GM12878 (cell line): ENCODE measurements at regions of chr3 and their contacts with region 1.

Region 1: DNA sequence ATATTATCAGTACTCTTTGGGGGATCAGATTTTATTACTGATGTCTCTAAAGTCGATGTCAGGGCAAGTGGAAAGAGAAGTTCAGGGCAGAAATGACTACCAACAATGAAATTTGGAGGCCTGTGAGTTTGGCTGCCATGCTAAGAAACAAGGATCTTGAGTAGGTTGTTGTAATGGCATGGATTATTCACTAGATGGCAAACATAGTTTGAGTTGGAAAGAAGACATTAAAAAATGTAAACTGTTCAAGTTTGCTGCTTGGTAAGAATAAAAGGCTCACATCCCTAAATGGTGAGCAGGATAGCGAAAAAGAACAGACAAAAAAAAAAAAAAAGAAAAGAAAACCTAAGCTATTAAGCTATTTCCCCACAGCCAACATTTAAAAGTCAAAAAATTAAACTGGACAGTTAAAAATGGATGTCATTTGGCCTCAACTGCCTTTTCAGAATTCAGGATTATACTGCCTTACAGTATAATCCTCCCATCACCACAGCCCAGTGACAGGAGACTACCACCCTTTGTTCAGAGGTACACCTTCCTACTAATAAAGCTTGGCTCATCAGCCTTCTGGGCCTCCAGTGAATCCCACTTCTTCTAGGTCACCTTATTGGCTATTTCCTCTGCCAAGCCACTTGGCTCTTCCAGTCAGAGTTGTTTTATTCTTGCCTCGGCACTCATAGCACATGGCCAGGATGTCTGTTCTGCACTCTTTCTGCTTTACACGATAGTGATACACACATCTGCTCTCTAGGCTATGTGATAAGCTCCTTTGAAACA is 163.7 kb downstream of the PLD1 start:
- DNase-seq: no peak
- ATAC-seq: peak; percentile 70
- H3K4me3 ChIP-seq: no peak overlapping the region
- H3K27ac ChIP-seq: no peak overlapping the region
- H3K4me1 ChIP-seq: no peaks in the 10 kb centered on the region
- H3K27me3 ChIP-seq: no peaks in the 10 kb centered on the region
- CTCF ChIP-seq: peak; percentile 44 to 67 (median 55)
- EP300 ChIP-seq: no peak
- POLR2A ChIP-seq: no peak
- RAD21 ChIP-seq: peak; percentile 80

Region 2: GRCh38 chr3:171712171-171712938 is 65.8 kb after region 1 on chr3:
- CTCF ChIA-PET with region 1: no interaction called
- POLR2A ChIA-PET with region 1: no interaction called
- RAD21 ChIA-PET with region 1: no interaction called
- SMC1A ChIA-PET with region 1: no interaction called
- in situ Hi-C with region 1: no loop called
- intact Hi-C with region 1: no loop called
- DNase-seq: no peak
- ATAC-seq: no peak
- H3K4me3 ChIP-seq: no peak overlapping the region
- H3K27ac ChIP-seq: no peak overlapping the region
- H3K4me1 ChIP-seq: no peaks in the 10 kb centered on the region
- H3K27me3 ChIP-seq: no peaks in the 10 kb centered on the region
- CTCF ChIP-seq: no peak
- EP300 ChIP-seq: no peak
- POLR2A ChIP-seq: no peak
- RAD21 ChIP-seq: no peak

Region 3: DNA sequence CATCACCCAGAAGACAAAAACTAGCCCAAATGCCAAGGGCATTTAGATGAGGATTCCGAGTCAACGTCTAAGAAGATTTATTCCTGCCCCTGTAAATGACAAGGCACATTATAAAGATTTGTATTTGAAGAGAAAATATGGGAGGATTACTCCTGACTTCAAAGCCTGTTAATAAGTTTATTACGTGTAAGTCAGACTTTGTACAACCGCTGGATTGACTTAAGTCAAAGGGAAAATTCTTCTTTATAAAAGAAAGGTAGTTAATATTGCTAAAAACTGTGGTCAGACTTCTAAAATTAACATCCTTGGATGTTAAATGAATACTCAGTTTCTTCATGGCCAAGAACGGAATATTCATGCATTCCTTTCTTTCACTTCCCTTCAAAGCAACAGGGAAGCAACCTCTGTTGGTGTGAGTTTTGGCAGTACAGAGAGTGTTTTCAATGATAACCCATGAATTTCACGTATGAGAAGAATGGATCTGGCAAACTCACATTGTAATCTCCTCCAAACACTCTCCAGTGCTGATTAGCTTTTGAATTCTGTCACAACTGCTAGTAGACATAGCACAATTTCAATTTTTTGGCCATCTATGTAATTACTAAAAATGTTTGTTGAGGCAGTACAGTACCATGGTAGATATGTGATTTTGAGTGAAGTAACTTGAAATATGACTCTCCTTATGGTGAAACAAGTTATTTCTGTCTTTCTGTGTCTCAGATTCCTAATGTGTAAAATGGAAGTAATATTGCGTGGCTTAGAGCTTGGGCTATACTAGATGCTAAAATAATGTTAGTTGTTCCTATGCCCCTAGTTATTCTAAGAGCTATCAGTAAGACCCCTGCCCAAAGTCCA is 101.7 kb after region 1 on chr3:
- CTCF ChIA-PET with region 1: no interaction called
- POLR2A ChIA-PET with region 1: no interaction called
- RAD21 ChIA-PET with region 1: no interaction called
- SMC1A ChIA-PET with region 1: no interaction called
- in situ Hi-C with region 1: no loop called
- intact Hi-C with region 1: no loop called
- DNase-seq: no peak
- ATAC-seq: no peak
- H3K4me3 ChIP-seq: no peak overlapping the region
- H3K27ac ChIP-seq: no peak overlapping the region
- H3K4me1 ChIP-seq: no peaks in the 10 kb centered on the region
- H3K27me3 ChIP-seq: no peaks in the 10 kb centered on the region; a peak in 1 of 4 replicates
- CTCF ChIP-seq: no peak
- EP300 ChIP-seq: no peak
- POLR2A ChIP-seq: no peak
- RAD21 ChIP-seq: no peak

Region 4: GRCh38 chr3:172476347-172476746 is 829.8 kb after region 1 on chr3:
- CTCF ChIA-PET with region 1: no interaction called
- POLR2A ChIA-PET with region 1: no interaction called
- RAD21 ChIA-PET with region 1: no interaction called
- SMC1A ChIA-PET with region 1: no interaction called
- in situ Hi-C with region 1: no loop called
- intact Hi-C with region 1: loop called (anchors 10 kb)
- DNase-seq: no peak
- ATAC-seq: no peak
- H3K4me3 ChIP-seq: no peak overlapping the region
- H3K27ac ChIP-seq: no peak overlapping the region
- H3K4me1 ChIP-seq: peaks cover 9% of the 10 kb centered on the region; the same call in 1 of the 2 replicates
- H3K27me3 ChIP-seq: no peaks in the 10 kb centered on the region
- CTCF ChIP-seq: no peak
- EP300 ChIP-seq: no peak
- POLR2A ChIP-seq: no peak
- RAD21 ChIP-seq: no peak